Sigmoid colon (tissue), 7 donors: ENCODE measurements at regions of chr5 and their contacts with region 1.

Region 1: DNA sequence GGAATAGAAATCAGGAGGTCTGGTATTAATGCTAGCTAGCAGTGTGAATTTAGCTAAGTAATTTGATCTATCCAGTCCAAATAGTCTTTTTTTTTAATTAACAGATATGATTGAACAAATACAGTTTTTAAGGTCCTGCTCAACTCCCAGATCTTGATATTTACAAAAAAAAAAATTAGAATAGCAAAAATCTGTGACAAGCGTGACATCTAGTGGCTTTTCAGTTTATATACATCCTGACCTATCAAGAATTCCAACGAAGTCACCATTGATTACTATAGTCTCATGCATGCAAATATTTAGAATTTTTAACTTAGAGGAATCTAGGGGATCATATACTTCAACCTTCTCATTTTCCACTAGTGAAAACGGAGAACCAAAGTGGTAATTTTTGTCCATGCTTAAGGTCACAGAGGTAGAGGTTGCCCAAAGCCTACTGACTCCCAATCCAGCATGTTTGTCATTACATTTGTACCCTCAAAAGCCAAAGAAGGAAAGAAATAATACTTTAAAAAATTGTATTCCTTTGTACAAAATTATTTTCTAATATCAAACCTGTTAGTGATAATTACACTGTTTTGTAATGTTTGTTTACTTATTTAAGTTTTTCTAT is 17.6 kb upstream of the TARS1 start:
- DNase-seq: no peak
- H3K4me3 ChIP-seq: no peak overlapping the region
- H3K27ac ChIP-seq: no peak overlapping the region
- H3K4me1 ChIP-seq: peaks cover 0 to 18% (median 0%) of the 10 kb centered on the region in 4 donors
- H3K27me3 ChIP-seq: no peaks in the 10 kb centered on the region
- CTCF ChIP-seq: peak; percentile 12 to 49 (median 26)
- EP300 ChIP-seq: no peak
- POLR2A ChIP-seq: no peak

Region 2: DNA sequence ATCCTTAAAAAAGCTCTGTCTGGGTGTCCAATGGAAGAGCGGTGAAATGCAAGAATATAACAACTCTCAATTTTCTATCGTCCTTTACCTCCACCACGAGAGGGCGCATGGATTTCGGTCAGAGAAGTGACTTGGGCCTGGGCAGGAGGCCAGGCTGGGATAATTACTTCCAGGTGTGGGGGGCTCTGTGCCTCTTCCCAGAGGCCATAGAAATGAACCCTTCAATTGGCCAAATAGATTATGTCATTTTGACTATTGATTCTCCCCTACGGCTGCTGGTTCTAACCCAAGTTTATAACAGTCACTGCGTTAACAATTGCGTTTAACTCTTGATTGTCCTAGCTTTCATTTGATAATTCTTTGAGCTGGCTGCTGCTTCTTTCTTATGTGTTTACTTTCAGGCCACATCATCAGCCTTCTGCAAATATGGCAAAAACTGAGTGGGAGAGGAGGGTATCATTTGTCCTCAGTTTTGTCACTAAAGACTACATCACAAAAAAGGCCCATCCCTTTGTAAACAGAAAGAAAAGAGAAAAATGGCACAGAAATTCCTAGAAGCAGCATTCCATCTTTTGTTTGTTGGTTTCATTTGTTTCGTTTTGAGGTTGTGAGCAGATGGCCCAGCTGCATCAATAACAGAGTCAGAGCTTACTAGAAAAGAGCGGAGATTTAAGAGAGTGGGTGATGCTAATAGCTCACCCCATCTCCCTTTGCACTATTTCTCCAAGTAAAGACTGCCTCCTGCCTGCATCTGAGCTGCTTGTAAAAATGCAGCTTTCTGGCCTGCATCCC is 933.1 kb before region 1 on chr5:
- intact Hi-C with region 1: loop called (anchors 10 kb)
- DNase-seq: peak; percentile 91
- H3K4me3 ChIP-seq: no peak overlapping the region
- H3K27ac ChIP-seq: peak overlapping the region in 1 of 4 donors; percentile 14
- H3K4me1 ChIP-seq: peaks cover 0 to 8% (median 1%) of the 10 kb centered on the region in 4 donors
- H3K27me3 ChIP-seq: no peaks in the 10 kb centered on the region
- CTCF ChIP-seq: peak; percentile 70 to 76 (median 72)
- EP300 ChIP-seq: no peak
- POLR2A ChIP-seq: no peak